ENCODE measurements at regions of chr3 and their contacts with region 1.

Region 1: GRCh38 chr3:108835101-108835500 is 12.5 kb downstream of the TRAT1 start:
- DNase-seq: peak; percentile 63
- ATAC-seq: peak; percentile 67
- H3K4me3 Mint-ChIP-seq: peak overlapping the region; percentile 74
- H3K27ac Mint-ChIP-seq: peak overlapping the region; percentile 92
- H3K4me1 Mint-ChIP-seq: peaks cover 84% of the 10 kb centered on the region
- H3K27me3 Mint-ChIP-seq: no peaks in the 10 kb centered on the region

Region 2: DNA sequence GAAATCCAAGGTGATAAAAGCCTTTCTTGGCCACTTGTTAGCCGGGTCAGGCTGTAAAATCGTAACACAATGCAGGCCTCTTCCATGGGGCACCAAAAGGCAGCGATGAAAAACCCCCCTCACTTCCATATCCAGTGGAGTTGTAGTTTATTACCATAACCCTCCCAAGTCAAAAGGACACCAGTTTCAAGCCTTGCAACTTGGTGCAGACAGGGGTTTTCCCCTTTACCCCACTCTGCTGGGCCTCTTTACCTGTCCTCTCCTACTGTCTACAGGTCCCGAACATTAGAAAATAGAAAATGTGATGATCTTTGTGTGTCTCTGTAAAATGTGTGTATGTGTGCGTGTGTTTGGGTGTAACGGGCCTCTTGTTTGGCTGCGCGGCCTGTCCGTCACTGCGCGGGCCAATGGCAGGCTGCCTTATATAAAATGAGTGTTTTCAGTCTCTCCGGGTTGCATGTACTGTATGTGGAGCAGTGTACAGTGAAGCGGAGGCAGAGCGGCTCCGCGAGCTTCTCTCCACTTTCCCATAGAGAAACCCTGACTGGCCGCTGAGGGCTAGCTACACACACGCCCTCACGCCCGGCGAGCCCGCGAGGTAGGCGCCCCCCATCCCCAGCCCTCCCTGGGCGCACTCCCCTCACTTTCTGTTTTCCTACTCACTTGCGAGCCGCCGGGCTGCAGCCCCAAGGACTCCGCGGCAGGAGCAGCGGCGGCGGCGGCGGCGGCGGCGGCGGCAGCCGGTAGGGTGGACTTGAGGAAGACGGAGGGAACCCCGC is 1312.4 kb before region 1 on chr3 and contains the start of gene BBX:
- CTCF ChIA-PET with region 1: no interaction called
- POLR2A ChIA-PET with region 1: no interaction called
- intact Hi-C with region 1: loop called in 1 of 2 experiments (anchors 5 kb)
- DNase-seq: peak; percentile 91
- ATAC-seq: peak; percentile 93
- H3K4me3 Mint-ChIP-seq: peak within 1 kb of the TSS; percentile 97
- H3K27ac Mint-ChIP-seq: peak within 1 kb of the TSS; percentile 95
- H3K4me1 Mint-ChIP-seq: peaks cover 25% of the 10 kb centered on the region
- H3K27me3 Mint-ChIP-seq: no peaks in the 10 kb centered on the region
- total RNA-seq, gene BBX: 38.9 to 63.4 TPM

Region 3: DNA sequence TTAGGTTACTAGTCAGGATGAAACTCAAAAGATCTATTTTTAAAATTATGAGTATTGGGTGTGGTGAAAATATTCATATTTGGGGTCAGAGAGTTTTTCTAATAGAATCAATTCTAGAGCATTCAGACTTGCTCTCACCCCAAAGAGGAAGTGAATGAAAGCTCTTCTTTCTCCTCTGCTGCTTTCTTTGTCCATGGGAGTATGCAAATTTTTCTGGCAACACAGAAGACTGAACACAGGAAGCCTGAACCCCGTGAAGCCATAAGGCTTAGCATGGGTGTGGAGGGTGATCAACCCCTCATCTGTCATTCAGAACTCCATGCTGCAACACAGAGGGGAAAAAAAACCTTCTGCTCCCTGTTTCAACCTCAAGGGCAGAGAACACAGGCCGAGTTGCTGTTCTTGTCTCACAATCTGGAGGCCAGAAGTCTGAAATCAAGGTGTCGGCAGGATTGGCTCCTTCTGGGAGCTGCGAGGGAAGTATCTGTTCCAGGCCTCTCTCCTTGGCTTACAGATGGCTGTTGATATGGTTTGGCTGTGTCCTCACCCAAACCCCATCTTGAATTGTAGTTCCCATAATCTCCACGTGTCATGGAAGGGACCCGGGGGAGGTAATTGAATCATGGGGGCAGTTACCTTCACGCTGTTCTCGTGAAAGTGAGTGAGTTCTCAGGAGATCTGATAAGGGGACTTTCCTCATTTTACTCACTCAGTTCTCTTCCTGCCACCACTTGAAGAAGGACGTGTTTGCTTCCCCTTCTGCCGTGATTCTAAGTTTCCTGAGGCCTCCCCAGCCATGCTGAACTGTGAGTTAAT is 710.6 kb before region 1 on chr3:
- CTCF ChIA-PET with region 1: no interaction called
- POLR2A ChIA-PET with region 1: interaction called, 3 read pairs
- intact Hi-C with region 1: loop called (anchors 5 to 10 kb)
- DNase-seq: peak; percentile 82
- ATAC-seq: peak; percentile 70
- H3K4me3 Mint-ChIP-seq: peak overlapping the region; percentile 93
- H3K27ac Mint-ChIP-seq: peak overlapping the region; percentile 96
- H3K4me1 Mint-ChIP-seq: peaks cover 62% of the 10 kb centered on the region
- H3K27me3 Mint-ChIP-seq: no peaks in the 10 kb centered on the region

Region 4: DNA sequence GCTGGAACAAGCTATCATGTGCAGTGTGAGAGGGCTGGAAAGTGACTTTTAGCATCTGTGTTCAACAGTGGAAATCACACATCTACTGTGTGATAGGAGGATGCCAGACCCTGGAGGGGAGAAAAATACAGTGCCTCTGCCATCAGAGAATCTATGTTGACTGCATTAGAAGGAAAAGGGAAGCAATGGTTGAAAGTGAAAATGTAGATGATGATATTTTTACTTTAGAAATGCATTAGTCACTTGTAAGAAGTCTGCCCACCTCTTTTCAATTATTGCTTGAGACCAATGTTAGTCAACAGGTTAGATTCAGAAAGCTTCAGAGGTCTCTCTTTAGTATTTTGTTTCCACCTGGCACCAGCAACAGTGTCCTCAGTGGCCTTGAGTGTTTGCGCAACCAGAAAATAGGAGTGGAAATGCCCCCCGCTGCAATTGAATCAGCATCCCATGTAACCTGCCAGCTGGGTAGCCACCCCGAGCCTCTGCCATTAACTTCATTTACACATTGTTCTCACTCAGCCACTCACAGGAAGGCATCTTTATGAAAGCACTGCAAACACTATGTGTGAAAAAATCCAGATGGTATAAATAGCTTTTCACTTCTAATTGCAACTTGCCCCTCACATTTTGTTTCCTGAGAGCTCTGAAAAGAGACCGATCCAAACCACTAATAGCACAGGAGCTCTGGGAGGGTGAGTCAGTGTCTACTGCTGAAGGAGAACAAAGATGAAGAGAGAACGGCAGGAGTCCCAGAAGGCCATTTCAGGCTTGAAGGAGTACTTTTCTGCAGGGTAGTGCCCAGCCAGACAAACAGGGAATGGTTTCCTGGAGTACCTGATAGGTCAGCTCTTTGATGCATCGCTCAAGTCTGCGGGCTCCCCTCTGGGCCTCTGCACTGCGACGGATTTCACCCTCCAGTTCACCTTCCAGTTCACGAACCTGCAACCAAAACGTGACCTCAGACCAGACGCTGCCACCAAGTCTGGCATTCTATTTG is 446.7 kb before region 1 on chr3:
- CTCF ChIA-PET with region 1: no interaction called
- POLR2A ChIA-PET with region 1: no interaction called
- intact Hi-C with region 1: loop called in 1 of 2 experiments (anchors 5 kb)
- DNase-seq: peak; percentile 29
- ATAC-seq: peak; percentile 90
- H3K4me3 Mint-ChIP-seq: no peak overlapping the region
- H3K27ac Mint-ChIP-seq: peak overlapping the region; percentile 8
- H3K4me1 Mint-ChIP-seq: peaks cover 25% of the 10 kb centered on the region
- H3K27me3 Mint-ChIP-seq: peaks cover 15% of the 10 kb centered on the region

Region 5: DNA sequence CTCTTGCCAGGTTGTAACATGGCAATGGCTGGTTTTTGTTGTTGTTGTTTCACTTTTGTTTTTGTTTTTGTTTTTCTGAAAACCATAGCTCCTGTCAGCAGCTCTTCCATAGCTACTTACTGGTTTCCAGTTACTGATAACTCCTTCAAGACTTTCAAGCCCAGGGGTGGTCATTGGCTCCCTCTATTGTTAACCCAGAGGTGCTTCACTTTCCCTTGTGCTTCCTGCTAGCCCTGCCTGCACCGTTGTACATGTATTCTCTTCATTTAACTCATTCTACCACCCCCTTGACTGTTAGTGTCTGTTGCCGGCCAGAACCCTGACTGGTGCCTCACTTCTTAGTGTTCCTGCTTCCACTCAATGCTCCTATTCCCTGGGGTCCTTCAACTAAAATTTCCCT is 16.7 kb before region 1 on chr3:
- CTCF ChIA-PET with region 1: interaction called, 48 read pairs
- POLR2A ChIA-PET with region 1: no interaction called
- intact Hi-C with region 1: loop called in 1 of 2 experiments (anchors 1 kb)
- DNase-seq: peak; percentile 76
- ATAC-seq: peak; percentile 90
- H3K4me3 Mint-ChIP-seq: peak overlapping the region; percentile 18
- H3K27ac Mint-ChIP-seq: peak overlapping the region; percentile 22
- H3K4me1 Mint-ChIP-seq: peaks cover 36% of the 10 kb centered on the region
- H3K27me3 Mint-ChIP-seq: no peaks in the 10 kb centered on the region

Region 6: GRCh38 chr3:108862865-108863798 is 28.0 kb after region 1 on chr3:
- CTCF ChIA-PET with region 1: interaction called, 4 read pairs
- POLR2A ChIA-PET with region 1: interaction called, 3 read pairs
- intact Hi-C with region 1: loop called (anchors 1 kb)
- DNase-seq: peak; percentile 53
- ATAC-seq: peak; percentile 87
- H3K4me3 Mint-ChIP-seq: peak overlapping the region; percentile 51
- H3K27ac Mint-ChIP-seq: peak overlapping the region; percentile 99
- H3K4me1 Mint-ChIP-seq: peaks cover 45% of the 10 kb centered on the region
- H3K27me3 Mint-ChIP-seq: no peaks in the 10 kb centered on the region